CD14-positive monocyte (primary cell): ENCODE measurements at regions of chr6 and their contacts with region 1.

Region 1: DNA sequence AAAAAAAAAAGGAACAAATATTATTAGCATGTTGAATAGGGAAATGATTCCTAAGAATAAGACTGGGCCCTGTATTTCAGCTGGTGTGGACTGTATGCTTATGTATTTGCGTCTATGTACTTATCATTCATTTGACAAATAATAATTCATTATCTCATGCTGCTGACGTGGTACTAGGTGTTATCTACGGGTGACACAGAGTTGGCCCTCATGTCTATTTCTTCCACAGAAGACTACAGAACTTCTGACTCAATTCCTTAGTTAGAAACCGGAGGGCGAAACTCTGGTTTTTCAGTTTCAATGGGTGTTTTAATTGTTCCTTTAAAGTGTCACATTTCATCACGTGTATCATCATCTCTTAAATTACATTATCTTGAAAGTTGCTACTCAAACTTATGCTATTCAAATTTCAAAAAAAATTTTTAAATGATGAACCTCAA is 305.9 kb downstream of the CLIC5 start:
- DNase-seq: peak; percentile 51 to 72 (median 72)
- H3K4me3 ChIP-seq: peak overlapping the region in 1 of 3 experiments; percentile 5
- H3K4me3 Mint-ChIP-seq: peak overlapping the region in 1 of 2 donors; percentile 54
- H3K27ac ChIP-seq: peak overlapping the region in 1 of 2 donors; percentile 75
- H3K27ac Mint-ChIP-seq: peak overlapping the region; percentile 83 to 96 (median 91)
- H3K4me1 ChIP-seq: peaks cover 35 to 38% of the 10 kb centered on the region in 2 donors
- H3K4me1 Mint-ChIP-seq: peaks cover 43% of the 10 kb centered on the region
- H3K27me3 ChIP-seq: no peaks in the 10 kb centered on the region
- H3K27me3 Mint-ChIP-seq: peaks cover 0 to 6% (median 0%) of the 10 kb centered on the region in 3 donors
- CTCF ChIP-seq: no peak

Region 2: GRCh38 chr6:44630125-44631028 is 1079.4 kb before region 1 on chr6:
- intact Hi-C with region 1: loop called in 1 of 2 experiments (anchors 10 kb)
- DNase-seq: peak; percentile 19 to 54 (median 34)
- H3K4me3 ChIP-seq: no peak overlapping the region
- H3K4me3 Mint-ChIP-seq: peak overlapping the region in 1 of 2 donors; percentile 5
- H3K27ac ChIP-seq: no peak overlapping the region
- H3K27ac Mint-ChIP-seq: peak overlapping the region in 1 of 7 donors; percentile 36
- H3K4me1 ChIP-seq: peaks cover 49 to 56% of the 10 kb centered on the region in 2 donors
- H3K4me1 Mint-ChIP-seq: peaks cover 56% of the 10 kb centered on the region
- H3K27me3 ChIP-seq: no peaks in the 10 kb centered on the region
- H3K27me3 Mint-ChIP-seq: peaks cover 0 to 11% (median 1%) of the 10 kb centered on the region in 3 donors
- CTCF ChIP-seq: peak; percentile 55

Region 3: GRCh38 chr6:45377554-45378333 is 332.1 kb before region 1 on chr6 and contains the start of gene SUPT3H:
- intact Hi-C with region 1: loop called in 1 of 2 experiments (anchors 10 kb)
- DNase-seq: peak; percentile 86 to 89 (median 88)
- H3K4me3 ChIP-seq: peak within 1 kb of the TSS; percentile 85 to 97 (median 92)
- H3K4me3 Mint-ChIP-seq: peak within 1 kb of the TSS; percentile 97 to 98
- H3K27ac ChIP-seq: peak within 1 kb of the TSS; percentile 98
- H3K27ac Mint-ChIP-seq: peak within 1 kb of the TSS; percentile 97 to 98 (median 98)
- H3K4me1 ChIP-seq: peaks cover 14 to 24% of the 10 kb centered on the region in 2 donors
- H3K4me1 Mint-ChIP-seq: peaks cover 24% of the 10 kb centered on the region
- H3K27me3 ChIP-seq: no peaks in the 10 kb centered on the region
- H3K27me3 Mint-ChIP-seq: no peaks in the 10 kb centered on the region
- CTCF ChIP-seq: no peak
- polyA plus RNA-seq, gene SUPT3H: 2.4 to 3.5 (median 2.5) TPM

Region 4: DNA sequence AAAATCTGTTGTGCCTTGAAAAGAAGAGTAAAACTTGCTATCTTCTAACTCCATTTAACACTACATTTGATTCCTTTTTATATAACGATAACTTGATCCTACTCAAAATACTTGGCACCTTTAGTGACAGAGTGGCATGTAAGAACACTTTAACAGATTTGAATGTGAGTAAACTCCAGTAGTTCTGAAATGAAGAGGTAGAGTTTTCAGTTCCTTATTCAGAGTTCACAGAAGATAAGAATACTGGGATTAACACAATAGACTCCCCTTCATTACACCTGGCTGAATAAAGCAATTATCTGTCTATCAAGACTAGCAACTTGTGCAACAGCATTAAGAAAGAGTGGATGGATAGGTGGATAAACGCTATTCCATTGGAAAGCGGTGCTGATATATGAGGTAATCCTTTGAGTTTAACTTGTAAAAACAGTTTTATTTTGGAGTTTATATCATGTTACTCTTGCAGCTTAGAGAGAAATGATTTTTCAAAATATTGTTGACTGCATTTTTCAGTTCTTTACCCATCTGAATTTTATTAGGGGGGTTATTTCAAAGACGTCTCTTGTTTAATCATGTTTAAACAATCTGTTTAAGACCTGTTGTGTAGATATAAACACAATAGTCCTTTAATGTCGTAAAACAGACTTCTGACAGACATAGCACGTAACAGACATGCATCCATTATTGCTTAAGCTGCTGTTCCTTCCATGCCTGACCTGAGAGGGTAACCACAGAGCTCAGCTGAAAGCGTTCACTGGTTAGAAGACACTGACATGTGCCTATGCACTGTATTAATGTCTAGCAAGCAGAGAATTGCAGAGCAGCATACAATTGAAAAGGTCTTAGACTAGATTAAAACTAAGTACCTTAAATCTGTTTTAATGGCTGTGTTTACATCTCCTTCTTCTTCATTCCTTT is 229.7 kb before region 1 on chr6:
- intact Hi-C with region 1: no loop called
- DNase-seq: peak; percentile 21 to 39 (median 31)
- H3K4me3 ChIP-seq: no peak overlapping the region
- H3K4me3 Mint-ChIP-seq: no peak overlapping the region
- H3K27ac ChIP-seq: peak overlapping the region in 1 of 2 donors; percentile 15
- H3K27ac Mint-ChIP-seq: peak overlapping the region in 4 of 7 donors; percentile 4 to 40 (median 30)
- H3K4me1 ChIP-seq: peaks cover 18 to 31% of the 10 kb centered on the region in 2 donors
- H3K4me1 Mint-ChIP-seq: peaks cover 20% of the 10 kb centered on the region
- H3K27me3 ChIP-seq: no peaks in the 10 kb centered on the region
- H3K27me3 Mint-ChIP-seq: no peaks in the 10 kb centered on the region
- CTCF ChIP-seq: no peak

Region 5: GRCh38 chr6:45667300-45667699 is 42.5 kb before region 1 on chr6:
- intact Hi-C with region 1: no loop called
- DNase-seq: no peak
- H3K4me3 ChIP-seq: no peak overlapping the region
- H3K4me3 Mint-ChIP-seq: no peak overlapping the region
- H3K27ac ChIP-seq: no peak overlapping the region
- H3K27ac Mint-ChIP-seq: no peak overlapping the region
- H3K4me1 ChIP-seq: peaks cover 14 to 18% of the 10 kb centered on the region in 2 donors
- H3K4me1 Mint-ChIP-seq: peaks cover 18% of the 10 kb centered on the region
- H3K27me3 ChIP-seq: peaks cover 8 to 16% of the 10 kb centered on the region in 2 donors
- H3K27me3 Mint-ChIP-seq: peaks cover 16 to 29% (median 20%) of the 10 kb centered on the region in 3 donors
- CTCF ChIP-seq: no peak